Right ventricle myocardium superior (tissue), 1 donor: ENCODE measurements at regions of chr5 and their contacts with region 1.

Region 1: DNA sequence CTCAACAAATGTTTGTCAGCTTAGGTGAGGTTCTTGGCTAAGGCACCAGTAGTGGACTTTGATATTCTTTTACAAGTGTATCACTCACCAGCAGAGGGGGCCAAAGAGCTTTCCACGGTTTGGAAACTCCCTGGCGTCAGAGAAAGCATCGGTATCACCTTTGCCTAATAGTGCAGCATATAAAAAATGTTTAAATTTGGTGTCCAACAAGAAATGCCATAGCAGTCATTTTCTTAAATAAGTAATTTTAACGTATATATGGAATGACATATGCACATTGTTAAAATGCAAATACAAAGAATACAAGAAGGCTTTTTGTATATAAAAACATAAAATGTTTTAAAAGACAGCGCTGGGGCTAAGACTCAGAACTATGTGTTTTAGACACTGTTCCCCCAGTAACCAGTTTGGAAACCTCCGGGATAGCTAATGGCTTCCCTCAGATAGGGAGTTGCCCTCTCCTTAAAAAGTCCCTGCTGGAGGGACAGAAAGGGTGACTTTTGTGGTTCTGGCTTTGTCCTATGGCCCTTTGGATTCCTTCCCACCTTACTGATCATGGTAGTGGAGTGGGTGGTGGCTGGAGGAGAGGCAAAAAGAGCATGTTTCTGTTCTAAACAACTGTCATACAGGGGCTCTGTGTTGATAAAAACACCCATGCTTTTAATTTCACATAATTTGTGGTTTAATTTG is 124.6 kb downstream of the GPBP1 start:
- DNase-seq: peak; percentile 51
- ATAC-seq: peak; percentile 94

Region 2: DNA sequence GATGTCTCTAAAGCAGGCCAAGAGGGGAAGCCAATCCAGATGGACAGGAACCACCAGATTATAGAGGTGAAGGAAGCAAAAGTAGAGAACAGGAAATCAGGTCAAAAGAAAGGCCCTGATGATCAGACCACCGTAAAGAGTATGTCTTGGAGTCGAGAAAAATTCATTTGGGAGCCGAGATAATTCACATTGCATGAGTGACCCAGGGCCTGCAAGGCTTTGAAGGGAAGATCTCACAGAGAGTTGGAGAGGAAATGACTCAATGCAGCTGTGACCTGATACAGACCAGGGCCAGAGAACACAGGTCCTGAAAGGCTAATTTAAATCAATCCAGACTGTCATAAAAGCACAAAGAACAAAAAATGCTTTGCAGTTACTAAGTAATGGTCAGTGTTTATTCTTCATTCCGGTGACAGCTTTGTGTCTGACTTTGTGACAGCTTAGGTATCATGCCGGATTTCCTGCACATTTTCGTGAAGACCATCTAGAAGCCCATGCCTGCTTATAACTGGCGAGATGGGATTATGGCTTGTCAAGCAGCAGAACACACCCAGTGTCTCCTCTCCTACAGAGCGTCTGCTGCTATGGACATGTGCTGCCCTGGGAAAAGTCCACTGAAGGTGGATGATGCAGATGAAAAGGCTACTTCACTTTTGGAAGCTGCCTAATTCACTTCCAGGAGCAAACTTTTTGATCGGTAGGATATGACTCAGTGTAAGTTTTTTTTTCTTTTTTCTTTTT is 189.9 kb after region 1 on chr5:
- intact Hi-C with region 1: loop called (anchors 10 kb)
- DNase-seq: no peak
- ATAC-seq: peak; percentile 58

Region 3: DNA sequence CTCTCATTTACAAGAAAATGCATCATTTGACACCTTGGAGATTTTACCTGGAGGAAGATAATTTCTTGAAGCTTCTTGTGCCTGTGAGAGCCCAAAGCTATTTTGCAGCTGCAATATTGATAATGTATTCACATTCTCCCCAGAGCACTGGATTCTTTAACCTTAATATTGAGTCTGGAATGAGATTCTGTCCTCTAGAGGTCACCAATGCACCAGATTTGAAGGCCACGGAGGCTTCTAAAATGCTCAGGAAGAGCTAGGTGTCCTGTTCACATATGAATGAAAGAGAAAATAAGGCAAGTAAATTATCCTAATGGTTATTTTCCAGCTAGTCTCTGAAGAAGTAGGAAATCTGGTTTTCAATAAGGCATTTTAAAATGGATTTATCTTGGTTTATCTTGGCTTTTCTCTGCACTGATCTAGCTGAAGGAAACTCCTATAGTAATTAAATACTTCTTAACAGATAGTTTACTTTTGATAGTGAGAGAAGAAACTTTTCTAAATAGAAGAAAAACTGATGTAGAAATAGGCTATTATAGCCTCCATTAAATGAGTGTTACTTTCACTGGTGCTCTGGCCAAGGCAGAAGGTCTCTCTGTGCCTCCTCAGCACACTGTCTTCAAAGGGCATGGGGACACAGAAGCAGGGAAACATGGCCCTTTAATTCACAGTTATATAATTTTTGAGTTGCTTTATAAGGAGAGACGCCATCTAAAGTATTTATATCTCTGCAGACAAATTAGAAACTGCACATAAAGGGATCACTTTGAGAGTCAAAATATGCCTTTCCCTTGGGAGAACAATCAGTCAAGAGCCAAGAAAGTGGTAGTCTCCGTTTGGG is 481.2 kb after region 1 on chr5:
- intact Hi-C with region 1: loop called (anchors 10 kb)
- DNase-seq: no peak
- ATAC-seq: peak; percentile 87